Prostate gland (tissue), 2 donors: ENCODE measurements at regions of chr3 and their contacts with region 1.

Region 1: DNA sequence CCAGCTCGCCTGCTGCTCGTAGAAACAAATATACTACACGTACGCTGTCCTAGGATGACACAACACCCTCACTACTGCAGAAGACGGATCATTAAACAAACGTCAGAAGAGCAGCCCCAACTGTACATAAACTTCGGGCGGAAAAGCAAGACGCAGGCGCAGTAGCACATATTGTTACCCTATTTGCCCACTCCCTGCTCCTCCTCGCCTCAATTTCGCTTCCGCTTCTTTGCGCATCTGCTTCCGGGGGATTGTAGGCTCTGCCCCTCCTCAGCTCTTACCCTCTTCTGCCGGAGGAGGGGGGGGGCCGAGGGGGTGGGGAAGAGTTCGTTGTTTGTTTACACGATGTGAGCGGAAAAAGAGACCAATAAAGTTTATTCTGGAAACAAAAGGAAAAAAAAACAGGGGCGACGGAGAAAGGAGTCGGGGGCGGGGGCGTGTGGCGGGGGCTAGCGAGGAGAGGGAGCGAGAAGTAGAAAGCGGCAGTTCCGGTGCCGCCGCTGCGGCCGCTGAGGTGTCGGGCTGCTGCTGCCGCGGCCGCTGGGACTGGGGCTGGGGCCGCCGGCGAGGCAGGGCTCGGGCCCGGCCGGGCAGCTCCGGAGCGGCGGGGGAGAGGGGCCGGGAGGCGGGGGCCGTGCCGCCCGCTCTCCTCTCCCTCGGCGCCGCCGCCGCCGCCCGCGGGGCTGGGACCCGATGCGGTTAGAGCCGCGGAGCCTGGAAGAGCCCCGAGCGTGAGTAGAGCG is at the start of gene PIK3CA:
- DNase-seq: peak; percentile 97
- H3K4me3 ChIP-seq: peak within 1 kb of the TSS; percentile 92 to 98
- H3K27ac ChIP-seq: peak within 1 kb of the TSS; percentile 99
- H3K4me1 ChIP-seq: no peaks in the 10 kb centered on the region
- H3K27me3 ChIP-seq: no peaks in the 10 kb centered on the region
- CTCF ChIP-seq: no peak
- POLR2A ChIP-seq: peak; percentile 64
- total RNA-seq, gene PIK3CA: 10.2 to 21.9 TPM

Region 2: DNA sequence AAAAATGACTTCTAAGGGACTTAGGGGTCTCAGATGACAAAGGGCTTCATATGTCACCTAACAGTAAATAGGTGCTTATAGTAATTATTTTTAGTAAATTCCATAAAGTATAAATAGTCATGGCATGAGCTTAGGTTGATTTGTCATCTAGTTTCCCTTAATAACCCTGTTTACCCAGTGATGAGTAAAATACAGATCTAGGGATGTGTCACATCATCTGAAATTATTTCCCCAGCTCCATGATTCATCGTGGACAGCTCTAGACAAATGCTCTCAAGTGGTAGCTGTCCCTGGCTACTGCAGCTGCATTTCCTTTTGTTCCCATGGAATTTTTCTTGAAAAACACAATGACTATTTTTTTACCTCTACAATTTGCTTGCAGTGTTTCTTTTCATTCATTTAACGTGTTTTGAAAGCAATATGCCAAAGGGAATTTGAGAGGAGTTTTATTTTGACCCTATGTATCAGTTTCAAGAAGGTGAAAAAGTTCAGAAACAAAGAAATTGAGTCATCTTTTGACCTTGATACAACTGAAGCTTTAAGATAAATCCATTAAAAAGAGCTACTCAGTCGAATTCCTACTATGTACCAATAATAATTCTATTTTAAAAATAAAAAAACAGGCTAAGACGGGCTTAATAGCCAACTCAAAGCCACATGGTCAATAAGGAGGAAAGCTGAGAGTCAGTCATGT is 370.2 kb before region 1 on chr3:
- intact Hi-C with region 1: no loop called
- DNase-seq: no peak
- H3K4me3 ChIP-seq: no peak overlapping the region
- H3K27ac ChIP-seq: no peak overlapping the region
- H3K4me1 ChIP-seq: no peaks in the 10 kb centered on the region
- H3K27me3 ChIP-seq: peaks cover 3% of the 10 kb centered on the region
- CTCF ChIP-seq: no peak
- POLR2A ChIP-seq: no peak

Region 3: GRCh38 chr3:179015551-179016020 is 132.5 kb before region 1 on chr3:
- intact Hi-C with region 1: loop called (anchors 5 kb)
- DNase-seq: peak; percentile 60
- H3K4me3 ChIP-seq: no peak overlapping the region
- H3K27ac ChIP-seq: no peak overlapping the region
- H3K4me1 ChIP-seq: no peaks in the 10 kb centered on the region
- H3K27me3 ChIP-seq: no peaks in the 10 kb centered on the region
- CTCF ChIP-seq: peak; percentile 37 to 81 (median 72)
- POLR2A ChIP-seq: no peak

Region 4: DNA sequence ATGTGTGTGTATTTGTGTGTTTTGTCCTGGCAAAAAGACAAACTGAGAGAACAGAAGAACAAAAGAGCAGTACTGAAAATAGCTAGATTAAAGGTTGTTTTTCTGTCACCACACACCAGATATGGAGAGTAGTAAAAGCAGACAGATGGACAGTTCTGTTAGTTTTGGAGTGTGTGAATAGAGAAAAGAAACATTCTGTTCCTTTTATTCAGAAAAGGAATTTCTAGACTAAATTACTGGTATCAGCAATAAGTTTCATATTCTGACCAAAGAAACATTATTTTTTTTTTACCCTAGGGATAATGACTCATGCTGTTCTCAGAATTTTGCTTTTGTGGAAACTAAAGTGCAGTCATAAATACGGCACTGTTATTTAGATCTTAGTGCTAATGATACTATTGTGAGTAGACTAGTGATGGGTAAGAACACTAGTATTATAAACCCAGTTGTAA is 33.0 kb after region 1 on chr3:
- intact Hi-C with region 1: loop called (anchors 5 kb)
- DNase-seq: no peak
- H3K4me3 ChIP-seq: no peak overlapping the region
- H3K27ac ChIP-seq: peak overlapping the region; percentile 6 to 27
- H3K4me1 ChIP-seq: peaks cover 2% of the 10 kb centered on the region
- H3K27me3 ChIP-seq: no peaks in the 10 kb centered on the region
- CTCF ChIP-seq: no peak
- POLR2A ChIP-seq: no peak

Region 5: DNA sequence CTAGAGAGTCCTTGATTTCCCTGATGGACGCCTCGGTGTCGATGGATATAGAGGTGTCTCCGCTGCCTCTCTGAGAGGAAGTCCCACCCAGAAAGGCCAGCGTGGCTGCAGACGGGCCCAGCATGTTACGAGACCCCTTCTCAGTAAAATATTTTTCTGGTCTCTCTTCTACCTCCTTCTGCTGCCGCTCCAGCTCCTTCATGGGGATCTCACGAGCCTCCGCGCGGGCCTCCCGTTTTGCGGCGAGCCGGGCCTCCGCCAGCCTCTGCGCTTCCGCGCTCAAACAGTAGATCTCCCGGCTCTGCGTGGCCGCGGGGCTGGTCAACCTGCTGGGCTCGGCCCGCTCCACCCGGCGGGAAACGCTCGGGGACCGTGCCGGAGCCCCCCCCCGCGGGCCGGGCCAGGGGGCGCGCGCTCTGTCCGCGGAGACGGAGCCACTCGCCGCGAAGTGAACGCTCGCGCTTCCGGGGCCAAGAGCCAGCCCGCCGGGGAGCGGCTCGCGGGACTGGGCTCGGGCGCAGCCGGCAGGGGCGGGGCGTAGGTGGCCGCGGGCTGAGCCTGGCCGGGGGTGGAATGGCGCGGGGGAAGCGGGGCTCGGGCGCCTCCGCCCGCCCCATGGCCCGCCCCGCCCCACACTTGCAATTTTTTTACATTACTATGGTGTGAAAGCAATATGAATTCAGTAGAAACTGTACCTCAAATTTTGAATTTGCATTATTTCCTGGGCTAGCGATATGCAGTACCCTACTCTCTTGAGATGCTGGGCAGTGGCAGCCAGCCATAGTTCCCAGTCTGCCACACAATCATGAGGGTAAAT is 113.1 kb after region 1 on chr3:
- intact Hi-C with region 1: loop called (anchors 5 kb)
- DNase-seq: peak; percentile 50
- H3K4me3 ChIP-seq: peak overlapping the region; percentile 57 to 60
- H3K27ac ChIP-seq: peak overlapping the region; percentile 15 to 66
- H3K4me1 ChIP-seq: no peaks in the 10 kb centered on the region
- H3K27me3 ChIP-seq: no peaks in the 10 kb centered on the region
- CTCF ChIP-seq: no peak
- POLR2A ChIP-seq: no peak